ENCODE measurements at regions of chr2 and their contacts with region 1.

Region 1: GRCh38 chr2:126932966-126933710 is 34.4 kb downstream of the TEX51 start:
- DNase-seq: no peak
- ATAC-seq: no peak
- H3K4me3 ChIP-seq: no peak overlapping the region
- H3K4me3 Mint-ChIP-seq: no peak overlapping the region
- H3K27ac ChIP-seq: no peak overlapping the region
- H3K27ac Mint-ChIP-seq: no peak overlapping the region
- H3K4me1 ChIP-seq: peaks cover 5% of the 10 kb centered on the region
- H3K4me1 Mint-ChIP-seq: peaks cover 4% of the 10 kb centered on the region
- H3K27me3 ChIP-seq: no peaks in the 10 kb centered on the region
- H3K27me3 Mint-ChIP-seq: peaks cover 23% of the 10 kb centered on the region
- CTCF ChIP-seq: no peak

Region 2: DNA sequence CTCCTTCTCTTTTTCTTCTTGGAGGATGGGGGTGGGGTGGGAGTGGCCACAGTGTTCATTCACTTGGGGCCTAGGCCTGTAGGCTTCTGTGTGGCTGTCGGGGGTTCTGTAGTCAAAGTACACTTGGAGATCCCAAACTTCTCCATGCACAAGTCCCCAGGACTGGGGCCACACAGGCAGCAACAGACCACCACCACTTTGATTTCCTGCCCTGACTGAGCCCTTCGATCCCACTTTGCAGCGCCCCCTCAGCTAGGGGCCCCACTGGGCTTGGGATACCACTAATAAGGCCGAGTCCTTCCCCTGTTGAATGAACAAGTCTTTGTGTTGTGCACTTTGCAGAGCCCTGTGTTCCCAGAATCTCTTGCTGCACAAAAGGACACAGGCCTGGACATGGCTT is 40.0 kb before region 1 on chr2:
- CTCF ChIA-PET with region 1: no interaction called
- POLR2A ChIA-PET with region 1: no interaction called
- intact Hi-C with region 1: loop called in 1 of 2 experiments (anchors 1 kb)
- DNase-seq: no peak
- ATAC-seq: no peak
- H3K4me3 ChIP-seq: no peak overlapping the region
- H3K4me3 Mint-ChIP-seq: no peak overlapping the region
- H3K27ac ChIP-seq: no peak overlapping the region
- H3K27ac Mint-ChIP-seq: no peak overlapping the region
- H3K4me1 ChIP-seq: no peaks in the 10 kb centered on the region
- H3K4me1 Mint-ChIP-seq: no peaks in the 10 kb centered on the region
- H3K27me3 ChIP-seq: no peaks in the 10 kb centered on the region
- H3K27me3 Mint-ChIP-seq: peaks cover 8% of the 10 kb centered on the region
- CTCF ChIP-seq: no peak

Region 3: DNA sequence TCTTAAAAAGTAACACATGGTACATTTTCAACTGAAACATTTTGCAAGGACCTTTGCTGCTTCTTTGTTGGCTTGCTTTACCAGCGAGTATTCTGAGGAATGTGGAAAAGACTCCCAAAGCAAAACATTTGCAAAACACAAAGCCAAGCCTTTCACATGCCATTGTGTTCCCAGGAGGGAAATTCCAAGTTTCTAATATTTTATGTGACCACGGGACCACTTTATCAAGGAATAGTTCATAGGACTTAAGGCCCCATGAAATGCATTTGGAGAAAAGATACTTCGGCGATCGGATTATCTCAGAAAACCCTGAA is 260.8 kb after region 1 on chr2:
- CTCF ChIA-PET with region 1: no interaction called
- POLR2A ChIA-PET with region 1: no interaction called
- intact Hi-C with region 1: no loop called
- DNase-seq: no peak
- ATAC-seq: no peak
- H3K4me3 ChIP-seq: no peak overlapping the region
- H3K4me3 Mint-ChIP-seq: no peak overlapping the region
- H3K27ac ChIP-seq: no peak overlapping the region
- H3K27ac Mint-ChIP-seq: no peak overlapping the region
- H3K4me1 ChIP-seq: no peaks in the 10 kb centered on the region
- H3K4me1 Mint-ChIP-seq: no peaks in the 10 kb centered on the region
- H3K27me3 ChIP-seq: no peaks in the 10 kb centered on the region
- H3K27me3 Mint-ChIP-seq: peaks cover 6% of the 10 kb centered on the region
- CTCF ChIP-seq: no peak

Measured in CD8-positive, alpha-beta T cell (primary cell).